Activated CD4-positive, alpha-beta memory T cell treated with anti-CD3 and anti-CD28 coated beads for 36 hours (primary cell): ENCODE measurements at regions of chr3 and their contacts with region 1.

Region 1: DNA sequence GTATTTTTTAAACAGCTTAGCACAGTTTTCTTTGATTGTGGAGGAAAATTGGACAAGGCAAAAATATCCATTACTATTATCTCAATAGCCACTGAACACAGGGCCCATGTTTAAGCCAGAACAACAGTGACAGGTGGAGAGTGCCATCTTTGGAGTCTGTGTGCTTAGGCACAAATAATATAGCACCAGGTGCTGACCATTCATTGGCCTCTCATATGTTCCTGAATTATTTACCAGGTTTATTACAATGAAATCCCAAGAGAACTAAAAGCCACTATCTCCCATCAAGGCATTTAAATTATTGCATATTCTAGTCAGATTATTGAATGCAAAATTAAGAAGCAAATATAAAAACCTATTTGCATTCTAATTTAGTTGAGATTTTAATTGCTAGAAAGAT is 39.6 kb downstream of the GPR156 start:
- DNase-seq: no peak
- H3K4me3 Mint-ChIP-seq: no peak overlapping the region
- H3K27ac Mint-ChIP-seq: no peak overlapping the region
- H3K4me1 Mint-ChIP-seq: no peaks in the 10 kb centered on the region
- H3K27me3 Mint-ChIP-seq: peaks cover 14% of the 10 kb centered on the region

Region 2: DNA sequence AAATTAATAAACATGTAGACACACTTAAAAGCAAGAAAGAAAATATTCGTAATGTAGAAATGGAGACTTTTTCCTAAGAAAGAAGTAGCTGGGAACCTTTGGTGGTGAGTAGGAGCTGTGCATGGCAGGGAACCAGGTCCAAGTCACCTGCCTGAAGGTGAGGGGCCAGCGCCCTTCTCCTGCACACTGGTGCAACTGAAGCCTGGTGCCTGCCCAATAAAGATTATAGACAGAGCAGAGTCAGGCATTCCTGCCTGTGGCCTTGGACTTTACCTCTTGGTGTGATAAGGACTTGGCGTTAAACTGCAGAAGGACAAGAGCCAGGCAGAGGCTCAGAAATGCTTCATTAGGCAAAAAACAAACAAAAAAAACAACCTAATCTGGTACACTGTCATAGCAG is 528.4 kb before region 1 on chr3:
- CTCF ChIA-PET with region 1: no interaction called
- POLR2A ChIA-PET with region 1: no interaction called
- intact Hi-C with region 1: no loop called
- DNase-seq: no peak
- H3K4me3 Mint-ChIP-seq: no peak overlapping the region
- H3K27ac Mint-ChIP-seq: no peak overlapping the region
- H3K4me1 Mint-ChIP-seq: no peaks in the 10 kb centered on the region
- H3K27me3 Mint-ChIP-seq: no peaks in the 10 kb centered on the region

Region 3: GRCh38 chr3:119891944-119892721 is 353.3 kb before region 1 on chr3:
- CTCF ChIA-PET with region 1: interaction called, 10 read pairs
- POLR2A ChIA-PET with region 1: no interaction called
- intact Hi-C with region 1: no loop called
- DNase-seq: peak; percentile 35
- H3K4me3 Mint-ChIP-seq: no peak overlapping the region
- H3K27ac Mint-ChIP-seq: no peak overlapping the region
- H3K4me1 Mint-ChIP-seq: peaks cover 13% of the 10 kb centered on the region
- H3K27me3 Mint-ChIP-seq: no peaks in the 10 kb centered on the region

Region 4: GRCh38 chr3:120357807-120358206 is 112.4 kb after region 1 on chr3:
- CTCF ChIA-PET with region 1: interaction called, 11 read pairs
- POLR2A ChIA-PET with region 1: no interaction called
- intact Hi-C with region 1: loop called (anchors 1 kb)
- DNase-seq: no peak
- H3K4me3 Mint-ChIP-seq: no peak overlapping the region
- H3K27ac Mint-ChIP-seq: no peak overlapping the region
- H3K4me1 Mint-ChIP-seq: no peaks in the 10 kb centered on the region
- H3K27me3 Mint-ChIP-seq: peaks cover 7% of the 10 kb centered on the region

Region 5: GRCh38 chr3:120558771-120559241 is 313.4 kb after region 1 on chr3:
- CTCF ChIA-PET with region 1: interaction called, 62 read pairs
- POLR2A ChIA-PET with region 1: interaction called, 4 read pairs
- intact Hi-C with region 1: loop called (anchors 1 kb)
- DNase-seq: peak; percentile 90
- H3K4me3 Mint-ChIP-seq: peak overlapping the region; percentile 73
- H3K27ac Mint-ChIP-seq: peak overlapping the region; percentile 30
- H3K4me1 Mint-ChIP-seq: peaks cover 15% of the 10 kb centered on the region
- H3K27me3 Mint-ChIP-seq: peaks cover 2% of the 10 kb centered on the region

Region 6: DNA sequence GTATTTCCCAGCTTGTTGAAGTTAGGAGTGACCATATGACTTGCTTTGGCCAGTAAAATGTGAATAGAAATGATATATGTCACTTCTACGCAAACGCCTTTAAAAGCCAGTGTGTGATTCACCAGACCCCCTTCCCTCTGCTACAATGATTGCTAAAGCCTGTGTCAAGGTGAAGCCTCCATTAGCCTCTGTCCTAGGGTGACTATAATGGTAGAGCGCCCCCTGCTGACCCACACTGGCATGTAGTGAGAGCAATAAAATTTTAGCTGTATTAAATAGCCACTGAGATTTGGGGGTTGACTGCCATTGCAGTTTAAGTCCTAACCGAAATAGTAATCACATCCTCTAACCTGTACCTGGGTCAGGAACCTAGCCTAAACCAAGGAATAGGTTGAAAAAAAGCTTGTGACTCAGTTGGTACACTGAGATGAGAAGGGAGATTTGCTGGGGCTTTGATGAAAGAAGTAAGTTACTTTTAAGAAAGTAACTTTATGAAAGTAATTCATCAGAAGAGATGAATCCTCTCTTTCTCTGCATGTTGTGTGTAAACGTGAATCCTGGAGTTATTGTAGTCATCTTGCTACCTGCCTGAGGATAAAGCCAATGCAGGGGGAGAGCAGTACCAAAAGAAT is 549.7 kb after region 1 on chr3:
- CTCF ChIA-PET with region 1: interaction called, 7 read pairs
- POLR2A ChIA-PET with region 1: no interaction called
- intact Hi-C with region 1: loop called (anchors 2 kb)
- DNase-seq: peak; percentile 87
- H3K4me3 Mint-ChIP-seq: no peak overlapping the region
- H3K27ac Mint-ChIP-seq: no peak overlapping the region
- H3K4me1 Mint-ChIP-seq: peaks cover 6% of the 10 kb centered on the region
- H3K27me3 Mint-ChIP-seq: no peaks in the 10 kb centered on the region